Activated CD4-positive, alpha-beta memory T cell treated with anti-CD3 and anti-CD28 coated beads for 36 hours (primary cell): ENCODE measurements at regions of chr15 and their contacts with region 1.

Region 1: DNA sequence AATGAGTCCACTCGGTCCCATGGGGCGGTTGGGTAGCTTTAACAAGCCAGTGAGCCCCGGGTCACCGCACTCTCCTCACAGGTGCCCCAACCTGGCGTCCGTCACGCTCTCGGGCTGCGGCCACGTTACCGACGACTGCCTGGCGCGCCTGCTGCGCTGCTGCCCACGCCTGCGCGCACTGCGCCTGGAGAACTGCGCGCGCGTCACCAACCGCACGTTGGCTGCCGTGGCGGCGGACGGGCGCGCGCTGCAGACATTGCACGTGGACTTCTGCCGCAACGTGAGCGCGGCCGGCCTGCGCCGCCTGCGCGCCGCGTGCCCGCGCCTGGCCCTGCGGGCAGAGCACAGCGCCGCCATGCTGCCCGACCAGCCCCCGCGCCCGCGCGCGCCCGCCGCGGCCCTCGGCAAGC is 3.4 kb downstream of the FBXL22 start:
- DNase-seq: peak; percentile 93
- H3K4me3 Mint-ChIP-seq: peak overlapping the region; percentile 93
- H3K27ac Mint-ChIP-seq: peak overlapping the region; percentile 96
- H3K4me1 Mint-ChIP-seq: peaks cover 54% of the 10 kb centered on the region
- H3K27me3 Mint-ChIP-seq: no peaks in the 10 kb centered on the region

Region 2: DNA sequence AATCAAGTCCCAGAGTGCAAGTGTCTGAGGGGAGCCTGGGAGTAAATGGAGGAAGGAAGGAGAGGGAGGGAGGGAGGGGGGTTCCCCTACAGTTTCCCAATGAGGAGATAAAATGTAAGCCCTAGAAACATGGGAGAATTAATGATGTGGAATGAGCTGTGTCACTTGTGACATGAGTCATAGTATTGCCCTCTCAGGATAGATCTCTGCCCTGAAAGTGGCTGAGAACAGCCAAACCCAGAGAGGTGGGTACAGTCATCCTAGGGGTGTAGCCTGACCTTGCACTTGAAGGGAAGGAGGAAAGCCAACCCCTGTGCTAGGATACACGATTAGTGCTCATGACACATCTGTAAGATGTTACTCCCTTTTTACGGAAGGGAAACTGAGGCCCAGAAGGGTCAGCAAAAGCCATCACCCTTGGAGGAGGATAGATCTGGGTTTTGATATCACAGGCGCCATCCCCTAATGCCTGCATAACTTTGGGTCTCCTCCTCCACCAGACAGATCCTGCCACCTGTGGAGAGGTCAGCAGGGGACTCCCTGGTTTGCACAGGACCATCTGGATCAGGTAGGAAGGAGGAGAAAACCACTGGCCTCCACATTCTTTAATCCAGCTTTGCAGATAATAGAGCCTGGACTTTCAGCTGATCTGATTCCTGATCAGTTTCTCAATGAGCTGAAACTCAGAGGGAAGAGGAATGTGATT is 119.4 kb before region 1 on chr15:
- CTCF ChIA-PET with region 1: interaction called, 21 read pairs
- POLR2A ChIA-PET with region 1: interaction called, 6 read pairs
- intact Hi-C with region 1: no loop called
- DNase-seq: peak; percentile 73
- H3K4me3 Mint-ChIP-seq: no peak overlapping the region
- H3K27ac Mint-ChIP-seq: peak overlapping the region; percentile 85
- H3K4me1 Mint-ChIP-seq: peaks cover 80% of the 10 kb centered on the region
- H3K27me3 Mint-ChIP-seq: no peaks in the 10 kb centered on the region

Region 3: DNA sequence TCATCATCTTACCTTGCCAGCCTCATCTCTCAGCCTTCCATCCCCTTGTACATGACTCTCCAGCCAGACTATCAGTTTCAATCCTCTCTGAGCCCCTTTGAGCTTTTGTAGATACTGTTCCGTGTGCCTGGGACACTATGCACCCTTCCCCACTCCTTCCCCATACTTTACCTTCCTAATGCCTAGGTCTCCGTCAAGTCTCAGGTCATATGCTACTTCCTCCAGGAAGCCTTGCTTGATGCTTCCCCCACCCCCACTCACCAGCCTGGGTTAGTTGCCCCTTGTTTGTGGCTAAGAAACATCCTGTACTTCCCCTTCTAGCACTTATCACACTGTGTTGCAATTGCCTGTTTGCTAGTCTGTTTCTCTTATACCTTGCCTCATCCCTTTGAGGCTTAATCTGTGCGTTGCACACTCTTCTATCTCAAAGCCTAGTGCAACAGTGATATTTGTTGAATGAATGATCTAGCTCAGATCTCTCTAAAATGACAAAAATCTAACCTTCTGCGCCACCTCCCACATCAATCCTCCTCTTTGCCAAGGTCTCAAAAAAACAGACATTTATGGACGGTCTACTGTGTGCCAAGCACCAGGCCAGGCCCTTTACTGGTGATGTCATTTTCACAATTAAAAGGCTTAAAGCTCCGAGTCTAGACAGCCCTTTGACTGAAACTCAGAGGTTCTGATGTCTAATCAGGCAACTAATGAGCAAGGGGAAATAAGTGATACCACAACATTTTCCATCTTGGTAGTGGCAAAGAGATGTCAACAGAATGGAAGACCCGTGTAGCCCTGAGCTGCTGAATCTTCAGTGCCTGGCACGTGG is 102.8 kb before region 1 on chr15:
- CTCF ChIA-PET with region 1: interaction called, 36 read pairs
- POLR2A ChIA-PET with region 1: interaction called, 12 read pairs
- intact Hi-C with region 1: loop called (anchors 1 kb)
- DNase-seq: peak; percentile 77
- H3K4me3 Mint-ChIP-seq: no peak overlapping the region
- H3K27ac Mint-ChIP-seq: no peak overlapping the region
- H3K4me1 Mint-ChIP-seq: peaks cover 80% of the 10 kb centered on the region
- H3K27me3 Mint-ChIP-seq: no peaks in the 10 kb centered on the region

Region 4: DNA sequence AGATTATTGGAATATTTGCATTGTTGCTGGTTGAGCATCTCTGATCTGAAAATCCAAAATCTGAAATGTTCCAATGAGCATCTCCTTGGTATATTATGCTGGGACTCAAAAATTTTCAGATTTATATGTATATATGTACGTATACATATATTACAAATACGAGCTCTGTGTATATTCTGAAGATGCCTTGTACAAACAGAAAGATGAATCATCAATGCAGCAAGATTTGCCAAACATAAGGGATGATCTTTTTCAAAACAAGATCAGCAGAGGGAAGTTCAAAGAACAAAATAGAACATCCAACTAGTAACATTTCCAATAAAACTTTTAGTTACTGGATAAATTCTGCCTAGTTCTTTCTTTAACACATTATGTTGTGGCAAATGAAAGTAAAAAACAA is 190.6 kb after region 1 on chr15:
- CTCF ChIA-PET with region 1: no interaction called
- POLR2A ChIA-PET with region 1: no interaction called
- intact Hi-C with region 1: no loop called
- DNase-seq: no peak
- H3K4me3 Mint-ChIP-seq: no peak overlapping the region
- H3K27ac Mint-ChIP-seq: no peak overlapping the region
- H3K4me1 Mint-ChIP-seq: peaks cover 22% of the 10 kb centered on the region
- H3K27me3 Mint-ChIP-seq: no peaks in the 10 kb centered on the region